ENCODE measurements at regions of chr12 and their contacts with region 1.

Region 1: DNA sequence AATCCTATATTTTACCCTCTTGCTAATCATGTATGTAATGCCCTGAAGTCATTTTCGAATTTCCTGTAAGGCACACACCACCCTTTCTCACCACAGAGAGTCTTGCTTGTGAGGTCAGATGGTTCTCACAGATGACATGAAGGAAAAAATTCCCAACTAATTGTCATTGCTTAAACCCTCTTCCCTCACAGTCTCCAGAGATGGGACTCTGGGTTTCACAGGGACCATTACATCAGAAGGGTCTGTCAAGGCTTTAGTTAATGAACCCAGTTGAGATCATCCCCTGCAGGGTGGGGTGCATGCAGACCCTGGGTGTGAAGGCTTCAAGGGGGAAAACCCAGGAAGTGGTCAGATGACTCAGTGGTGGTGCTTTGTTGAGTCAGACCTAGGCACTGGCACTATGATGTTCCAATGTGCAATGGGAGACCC is 229.6 kb downstream of the BCAT1 start:
- DNase-seq: peak; percentile 77
- ATAC-seq: peak; percentile 93
- H3K4me3 Mint-ChIP-seq: no peak overlapping the region
- H3K27ac Mint-ChIP-seq: peak overlapping the region; percentile 87
- H3K4me1 Mint-ChIP-seq: peaks cover 33% of the 10 kb centered on the region
- H3K27me3 Mint-ChIP-seq: peaks cover 8% of the 10 kb centered on the region

Region 2: GRCh38 chr12:24705741-24706358 is 13.5 kb before region 1 on chr12:
- CTCF ChIA-PET with region 1: interaction called, 4 read pairs
- POLR2A ChIA-PET with region 1: interaction called, 5 read pairs
- intact Hi-C with region 1: loop called (anchors 1 to 2 kb)
- DNase-seq: peak; percentile 22
- ATAC-seq: peak; percentile 21
- H3K4me3 Mint-ChIP-seq: peak overlapping the region; percentile 42
- H3K27ac Mint-ChIP-seq: peak overlapping the region; percentile 86
- H3K4me1 Mint-ChIP-seq: peaks cover 16% of the 10 kb centered on the region
- H3K27me3 Mint-ChIP-seq: peaks cover 12% of the 10 kb centered on the region

Region 3: DNA sequence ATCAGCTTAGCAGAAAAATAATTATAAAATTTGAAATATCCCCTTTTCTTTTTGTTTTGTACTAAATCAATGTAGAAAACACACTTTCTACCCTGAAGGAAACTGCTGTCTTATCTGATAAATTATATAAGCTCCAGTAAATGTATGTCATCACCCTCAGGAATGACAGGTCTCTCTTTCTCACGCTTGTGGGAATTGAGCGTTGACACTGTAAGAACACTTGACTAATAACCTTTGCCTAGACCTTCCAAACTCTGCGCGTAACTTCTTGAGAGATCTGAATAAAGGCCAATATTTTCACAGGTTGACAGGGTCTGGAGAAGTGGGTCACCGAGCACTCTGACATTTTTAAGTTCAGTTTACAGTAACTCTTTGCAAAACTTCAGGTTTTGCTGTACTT is 91.1 kb after region 1 on chr12:
- CTCF ChIA-PET with region 1: no interaction called
- POLR2A ChIA-PET with region 1: no interaction called
- intact Hi-C with region 1: no loop called
- DNase-seq: no peak
- ATAC-seq: no peak
- H3K4me3 Mint-ChIP-seq: no peak overlapping the region
- H3K27ac Mint-ChIP-seq: no peak overlapping the region
- H3K4me1 Mint-ChIP-seq: peaks cover 19% of the 10 kb centered on the region
- H3K27me3 Mint-ChIP-seq: peaks cover 1% of the 10 kb centered on the region

Measured in activated CD4-positive, alpha-beta T cell treated with anti-CD3 and anti-CD28 coated beads for 36 hours (primary cell).